Gastrocnemius medialis (tissue), 4 donors: ENCODE measurements at regions of chr1 and their contacts with region 1.

Region 1: GRCh38 chr1:221557013-221557412 is 184.9 kb downstream of the DUSP10 start:
- DNase-seq: no peak
- ATAC-seq: no peak
- H3K4me3 ChIP-seq: no peak overlapping the region
- H3K27ac ChIP-seq: no peak overlapping the region
- H3K4me1 ChIP-seq: peaks cover 16 to 20% of the 10 kb centered on the region in 2 donors
- H3K27me3 ChIP-seq: no peaks in the 10 kb centered on the region
- CTCF ChIP-seq: no peak
- POLR2A ChIP-seq: no peak

Region 2: GRCh38 chr1:220852408-220852807 is 704.6 kb before region 1 on chr1:
- in situ Hi-C with region 1: no loop called
- intact Hi-C with region 1: no loop called
- DNase-seq: no peak
- ATAC-seq: no peak
- H3K4me3 ChIP-seq: no peak overlapping the region
- H3K27ac ChIP-seq: no peak overlapping the region
- H3K4me1 ChIP-seq: no peaks in the 10 kb centered on the region
- H3K27me3 ChIP-seq: no peaks in the 10 kb centered on the region
- CTCF ChIP-seq: no peak
- POLR2A ChIP-seq: no peak

Region 3: DNA sequence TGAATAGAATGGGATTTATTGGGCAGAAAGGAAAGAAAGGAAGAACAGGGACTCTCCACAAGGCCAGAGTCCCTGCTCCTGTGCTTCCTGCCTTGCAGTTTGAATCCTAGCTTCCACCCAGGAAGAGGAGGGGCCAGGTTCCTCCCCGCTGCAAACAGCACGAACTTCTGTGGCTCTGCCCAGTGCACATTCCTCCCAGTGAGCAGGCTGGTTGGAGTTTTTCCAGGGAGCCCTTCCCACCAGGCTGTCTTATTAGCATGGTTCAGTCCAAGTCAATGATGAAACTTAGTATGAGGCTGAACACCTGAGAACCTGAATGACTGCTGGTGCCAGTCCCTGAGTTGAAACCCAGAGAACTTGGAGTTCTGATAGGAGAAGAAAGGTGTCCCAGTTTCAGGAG is 62.3 kb before region 1 on chr1:
- in situ Hi-C with region 1: no loop called
- intact Hi-C with region 1: loop called (anchors 10 kb)
- DNase-seq: peak; percentile 13 to 61
- ATAC-seq: peak; percentile 62 to 82
- H3K4me3 ChIP-seq: no peak overlapping the region
- H3K27ac ChIP-seq: no peak overlapping the region
- H3K4me1 ChIP-seq: peaks cover 0 to 13% of the 10 kb centered on the region in 2 donors
- H3K27me3 ChIP-seq: no peaks in the 10 kb centered on the region
- CTCF ChIP-seq: no peak
- POLR2A ChIP-seq: no peak